ENCODE measurements at regions of chr10 and their contacts with region 1.

Region 1: DNA sequence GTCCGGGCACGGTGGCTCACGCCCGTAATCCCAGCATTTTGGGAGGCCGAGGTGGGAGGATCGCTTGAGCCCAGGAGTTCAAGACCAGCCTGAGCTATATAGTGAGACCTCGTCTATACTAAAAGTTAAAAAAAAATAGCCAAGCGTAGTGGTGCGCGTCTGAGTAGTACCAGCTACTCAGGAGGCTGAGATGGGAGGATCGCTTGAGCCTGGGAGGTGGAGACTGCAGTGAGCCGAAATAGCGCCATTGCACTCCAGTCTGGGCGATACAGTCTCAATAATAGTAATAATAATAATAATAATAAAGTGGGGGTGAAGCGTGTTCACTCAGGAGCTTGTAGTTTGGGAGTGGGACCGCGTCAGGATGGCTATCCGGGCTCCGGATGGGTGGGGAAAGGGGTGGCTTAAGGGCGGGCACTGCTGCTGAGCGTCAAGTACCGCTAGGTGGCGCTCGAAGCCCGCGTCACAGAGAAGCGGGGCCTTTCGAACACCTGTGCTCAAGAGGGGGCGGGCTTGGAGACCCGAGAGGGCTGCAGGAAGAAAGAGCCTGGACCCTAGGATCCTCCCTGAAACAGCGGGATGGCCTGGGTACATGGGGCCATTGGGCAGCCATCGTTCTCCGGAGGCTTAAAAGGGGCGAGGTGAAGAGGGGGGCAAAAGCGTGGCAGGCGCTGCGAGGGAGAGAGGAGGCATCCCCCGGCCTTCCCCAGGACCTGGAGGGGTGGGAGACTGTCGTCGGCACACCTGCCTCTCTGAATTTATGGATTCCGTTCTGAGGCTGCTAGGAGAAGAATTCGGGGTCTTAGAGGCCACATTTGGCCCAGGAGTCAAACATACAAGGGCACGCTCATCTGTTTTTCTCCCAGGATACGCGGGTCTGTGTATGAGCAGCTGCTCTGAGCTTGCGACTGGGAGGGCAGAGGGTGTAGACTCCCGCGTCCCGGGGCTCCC is 14.5 kb downstream of the LBX1 start:
- DNase-seq: peak; percentile 47
- H3K4me3 ChIP-seq: no peak overlapping the region
- H3K27ac ChIP-seq: no peak overlapping the region
- H3K4me1 ChIP-seq: peaks cover 14% of the 10 kb centered on the region
- H3K27me3 ChIP-seq: peaks cover 20% of the 10 kb centered on the region
- CTCF ChIP-seq: peak; percentile 52 to 91

Region 2: GRCh38 chr10:101238732-101239105 is 24.0 kb after region 1 on chr10:
- CTCF ChIA-PET with region 1: interaction called, 13 read pairs
- dilution Hi-C with region 1: no loop called
- in situ Hi-C with region 1: no loop called
- intact Hi-C with region 1: no loop called
- DNase-seq: no peak
- H3K4me3 ChIP-seq: no peak overlapping the region
- H3K27ac ChIP-seq: no peak overlapping the region
- H3K4me1 ChIP-seq: no peaks in the 10 kb centered on the region
- H3K27me3 ChIP-seq: peaks cover 26% of the 10 kb centered on the region
- CTCF ChIP-seq: peak; percentile 24 to 30

Region 3: DNA sequence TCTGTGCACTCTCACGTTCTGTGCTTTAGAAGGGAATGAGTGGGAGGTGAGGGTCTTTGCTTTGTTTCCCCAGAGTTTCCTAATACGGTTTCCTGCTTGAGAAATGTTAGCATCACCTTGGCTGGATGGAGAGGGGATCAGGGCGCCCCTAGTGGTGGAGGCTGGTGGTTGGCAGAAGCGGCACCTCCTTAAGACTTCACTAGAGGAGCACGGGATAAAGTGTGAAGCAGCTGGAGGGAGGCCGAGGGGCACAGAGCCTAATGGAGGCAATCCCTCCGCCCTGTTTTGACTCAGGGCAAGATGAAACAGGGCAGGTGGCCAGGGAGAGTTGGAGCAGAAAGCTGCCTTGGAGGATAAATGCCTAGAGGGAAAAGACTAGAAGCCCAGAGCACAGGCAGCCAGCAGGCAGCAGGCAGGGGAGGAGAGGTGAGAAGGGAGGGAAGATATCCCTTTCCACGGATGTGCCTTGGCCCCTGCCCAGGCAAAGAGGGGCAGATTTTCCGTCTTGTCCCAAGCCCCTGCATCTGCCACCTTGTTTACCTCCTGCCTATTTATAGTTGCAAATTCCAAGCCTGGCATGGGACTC is 83.3 kb after region 1 on chr10:
- CTCF ChIA-PET with region 1: no interaction called
- dilution Hi-C with region 1: no loop called
- in situ Hi-C with region 1: loop called (anchors 5 kb)
- intact Hi-C with region 1: no loop called
- DNase-seq: peak; percentile 37
- H3K4me3 ChIP-seq: no peak overlapping the region
- H3K27ac ChIP-seq: no peak overlapping the region
- H3K4me1 ChIP-seq: no peaks in the 10 kb centered on the region
- H3K27me3 ChIP-seq: no peaks in the 10 kb centered on the region
- CTCF ChIP-seq: peak; percentile 88 to 91

Region 4: DNA sequence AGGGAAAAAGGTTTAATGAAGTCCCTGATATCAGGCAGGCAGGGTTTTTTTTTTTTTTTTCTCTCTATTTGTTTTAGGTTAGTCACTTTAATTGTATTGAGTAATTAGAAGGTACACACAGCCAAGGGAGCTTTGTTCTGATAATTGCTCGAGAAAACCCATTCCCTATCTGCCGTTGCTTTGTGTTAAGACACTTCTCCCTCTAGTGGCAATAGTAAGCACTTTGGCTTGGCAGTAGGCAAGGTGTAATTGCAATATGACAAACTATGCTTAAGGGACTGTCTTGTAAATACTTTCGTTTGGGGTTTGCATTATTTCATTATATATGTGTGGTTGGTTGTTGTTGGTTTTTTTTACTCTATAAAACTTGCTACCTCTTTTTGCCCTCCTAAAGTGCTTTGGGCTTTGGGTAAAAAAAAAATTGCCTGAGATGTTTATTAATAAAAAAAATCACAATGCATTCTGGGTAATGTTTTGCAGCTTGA is 252.6 kb after region 1 on chr10:
- CTCF ChIA-PET with region 1: interaction called, 13 read pairs
- dilution Hi-C with region 1: no loop called
- in situ Hi-C with region 1: no loop called
- intact Hi-C with region 1: loop called (anchors 1 kb)
- DNase-seq: peak; percentile 73
- H3K4me3 ChIP-seq: peak overlapping the region in 1 of 3 experiments; percentile 11
- H3K27ac ChIP-seq: no peak overlapping the region
- H3K4me1 ChIP-seq: no peaks in the 10 kb centered on the region
- H3K27me3 ChIP-seq: no peaks in the 10 kb centered on the region
- CTCF ChIP-seq: peak; percentile 90 to 98

Region 5: GRCh38 chr10:101840741-101841453 is 626.2 kb after region 1 on chr10:
- CTCF ChIA-PET with region 1: no interaction called
- dilution Hi-C with region 1: no loop called
- in situ Hi-C with region 1: no loop called
- intact Hi-C with region 1: loop called (anchors 5 kb)
- DNase-seq: peak; percentile 64
- H3K4me3 ChIP-seq: peak overlapping the region; percentile 9 to 40 (median 28)
- H3K27ac ChIP-seq: no peak overlapping the region
- H3K4me1 ChIP-seq: peaks cover 14% of the 10 kb centered on the region
- H3K27me3 ChIP-seq: no peaks in the 10 kb centered on the region
- CTCF ChIP-seq: peak; percentile 87 to 98

Measured in mammary epithelial cell (primary cell).